ENCODE measurements at regions of chr19 and their contacts with region 1.

Region 1: DNA sequence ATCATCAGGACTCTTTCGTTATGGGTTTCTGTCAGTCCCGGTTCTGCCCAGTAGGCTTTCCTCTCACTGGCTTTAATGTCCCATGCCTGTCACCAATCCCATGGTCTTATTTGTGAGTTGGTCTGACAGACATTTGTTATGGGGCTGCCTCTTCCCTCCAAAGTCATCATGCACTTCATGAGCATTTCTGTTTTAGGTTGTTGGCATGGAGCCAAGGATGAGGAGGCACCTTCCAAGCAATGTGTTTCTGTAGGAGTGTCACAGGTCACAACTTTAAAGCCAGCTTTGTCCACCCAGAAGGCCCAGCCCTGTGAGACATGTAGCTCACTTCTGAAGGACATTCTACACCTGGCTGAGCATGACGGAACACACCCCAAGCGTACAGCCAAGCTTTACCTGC is 8.5 kb downstream of the ZNF17 start:
- DNase-seq: no peak
- H3K4me3 ChIP-seq: no peak overlapping the region
- CTCF ChIP-seq: no peak

Region 2: GRCh38 chr19:57382806-57383488 is 36.5 kb before region 1 on chr19:
- in situ Hi-C with region 1: loop called (anchors 5 kb)
- DNase-seq: no peak
- H3K4me3 ChIP-seq: no peak overlapping the region
- CTCF ChIP-seq: no peak

Region 3: DNA sequence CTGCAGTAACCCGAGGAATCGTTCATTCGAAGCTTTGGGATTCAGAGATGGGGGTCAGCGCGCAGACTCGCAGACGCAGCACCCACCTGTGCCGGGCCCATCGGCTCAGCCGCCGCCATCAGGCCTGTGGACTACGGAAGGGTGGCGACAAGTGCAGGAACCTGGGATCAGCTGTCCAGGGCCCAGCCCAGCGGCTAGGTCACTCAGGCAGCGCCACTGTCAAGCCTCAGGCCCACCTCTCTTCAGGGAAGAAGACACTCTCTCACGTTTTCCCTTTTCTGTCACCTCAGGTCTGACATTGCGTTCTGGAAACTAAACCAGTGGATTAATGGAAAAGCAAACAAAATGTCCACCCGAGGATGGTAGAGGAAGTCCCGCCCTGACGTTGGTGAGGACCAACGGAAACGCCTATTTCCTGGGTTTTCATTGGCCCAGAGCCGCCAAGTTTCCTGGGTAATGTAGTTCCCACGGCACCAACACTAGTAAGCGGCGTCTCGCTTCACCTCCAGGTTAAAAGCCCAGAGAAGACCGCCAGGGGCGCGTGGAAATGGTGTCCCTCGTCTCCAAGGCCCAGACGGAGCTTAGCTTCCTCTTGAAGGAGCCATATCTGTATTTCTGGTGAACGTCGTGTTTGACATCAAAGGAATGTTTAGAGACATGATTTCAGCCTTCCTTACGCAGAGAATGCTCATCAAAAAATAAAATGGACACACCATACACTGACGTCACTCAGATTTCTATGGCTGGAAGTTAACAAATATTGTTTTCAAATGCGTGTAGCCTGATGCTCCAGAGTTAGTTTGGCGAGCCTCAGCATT is 58.0 kb after region 1 on chr19 and contains the start of gene ZNF772:
- in situ Hi-C with region 1: no loop called
- DNase-seq: peak; percentile 88
- H3K4me3 ChIP-seq: peak within 1 kb of the TSS; percentile 66
- CTCF ChIP-seq: peak; percentile 54